ENCODE measurements at regions of chr12 and their contacts with region 1.

Region 1: DNA sequence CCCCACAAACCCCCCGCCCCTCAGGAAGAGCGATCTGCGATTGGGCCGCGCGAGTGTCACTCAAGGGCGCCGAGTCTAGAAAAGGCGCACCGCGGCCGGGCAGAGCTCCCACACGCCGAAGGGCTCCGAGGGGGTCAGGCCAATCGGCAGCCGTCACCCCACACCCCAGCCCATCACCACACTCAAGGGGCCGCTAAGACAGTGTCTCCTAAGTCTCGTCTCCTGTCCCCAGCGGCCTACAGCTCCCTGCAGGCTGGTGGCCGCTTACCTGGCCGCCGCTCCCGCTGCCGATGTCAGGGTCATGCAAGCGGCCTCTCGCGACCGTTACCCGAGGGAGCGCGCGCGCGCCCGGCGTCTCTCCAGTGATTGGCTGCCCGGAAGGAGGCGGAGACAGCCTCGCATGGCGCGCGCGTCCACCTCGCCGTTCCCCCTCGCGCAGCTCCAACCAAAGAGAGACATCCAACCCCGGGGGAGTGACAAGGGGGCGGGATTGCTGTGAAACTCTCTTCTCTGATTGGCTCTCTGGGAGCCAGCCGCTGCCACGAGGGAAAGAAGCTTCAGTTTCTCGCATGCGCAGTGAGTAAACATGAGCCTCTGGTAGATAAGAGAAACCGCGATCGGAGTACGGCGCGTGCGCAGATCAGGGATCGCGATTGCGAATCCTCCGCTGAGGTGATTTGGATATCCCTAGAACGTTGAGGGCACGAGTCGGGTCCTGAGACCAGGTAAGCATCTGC is at the starts of genes MPHOSPH9 and MTRFR:
- DNase-seq: peak; percentile 100
- ATAC-seq: peak; percentile 95
- H3K4me3 ChIP-seq: peak within 1 kb of the TSS; percentile 81 to 96 (median 95)
- H3K27ac ChIP-seq: peak within 1 kb of the TSS; percentile 89
- H3K4me1 ChIP-seq: peaks cover 55% of the 10 kb centered on the region
- H3K27me3 ChIP-seq: no peaks in the 10 kb centered on the region; a peak in 1 of 5 replicates
- CTCF ChIP-seq: no peak
- EP300 ChIP-seq: peak in 1 of 2 experiments; percentile 21; a peak in 2 of 4 replicates
- POLR2A ChIP-seq: peak; percentile 99
- RAD21 ChIP-seq: peak; percentile 72
- total RNA-seq, gene MPHOSPH9: 63.4 and 105 TPM in 2 replicates
- total RNA-seq, gene MTRFR: 9.9 and 10.0 TPM in 2 replicates

Region 2: GRCh38 chr12:122965851-122966722 is 266.9 kb before region 1 on chr12 and contains the start of gene ABCB9:
- CTCF ChIA-PET with region 1: no interaction called
- POLR2A ChIA-PET with region 1: interaction called, 7 read pairs
- in situ Hi-C with region 1: no loop called
- intact Hi-C with region 1: loop called (anchors 5 kb)
- DNase-seq: peak; percentile 85
- ATAC-seq: peak; percentile 88
- H3K4me3 ChIP-seq: peak within 1 kb of the TSS; percentile 74 to 82 (median 82)
- H3K27ac ChIP-seq: no peak within 1 kb of the TSS
- H3K4me1 ChIP-seq: peaks cover 53% of the 10 kb centered on the region
- H3K27me3 ChIP-seq: no peaks in the 10 kb centered on the region
- CTCF ChIP-seq: 0 out of 2 replicates have a peak, but pooled peaks have one; percentile 30
- EP300 ChIP-seq: peak in 1 of 2 experiments; percentile 20; a peak in 1 of 4 replicates
- POLR2A ChIP-seq: peak; percentile 40 to 80; a peak in 3 of 4 replicates
- RAD21 ChIP-seq: no peak
- total RNA-seq, gene ABCB9: 3.4 and 6.0 TPM in 2 replicates

Region 3: GRCh38 chr12:123043536-123044001 is 189.4 kb before region 1 on chr12:
- CTCF ChIA-PET with region 1: interaction called, 3 read pairs
- POLR2A ChIA-PET with region 1: interaction called, 17 read pairs
- in situ Hi-C with region 1: loop called (anchors 5 kb)
- intact Hi-C with region 1: loop called (anchors 1 kb)
- DNase-seq: peak; percentile 60
- ATAC-seq: peak; percentile 93
- H3K4me3 ChIP-seq: no peak overlapping the region
- H3K27ac ChIP-seq: no peak overlapping the region
- H3K4me1 ChIP-seq: 0 out of 2 replicates have a peak, but pooled peaks cover 5% of the 10 kb centered on the region
- H3K27me3 ChIP-seq: no peaks in the 10 kb centered on the region
- CTCF ChIP-seq: peak; percentile 93
- EP300 ChIP-seq: no peak
- POLR2A ChIP-seq: no peak
- RAD21 ChIP-seq: peak; percentile 90

Region 4: GRCh38 chr12:123150744-123151456 is 82.1 kb before region 1 on chr12 and contains the start of gene PITPNM2:
- CTCF ChIA-PET with region 1: no interaction called
- POLR2A ChIA-PET with region 1: interaction called, 20 read pairs
- in situ Hi-C with region 1: no loop called
- intact Hi-C with region 1: no loop called
- DNase-seq: no peak
- ATAC-seq: peak; percentile 70
- H3K4me3 ChIP-seq: peak within 1 kb of the TSS; percentile 90 to 98 (median 95)
- H3K27ac ChIP-seq: peak within 1 kb of the TSS; percentile 63
- H3K4me1 ChIP-seq: peaks cover 71% of the 10 kb centered on the region
- H3K27me3 ChIP-seq: no peaks in the 10 kb centered on the region
- CTCF ChIP-seq: no peak; the same call in 1 of the 2 replicates
- EP300 ChIP-seq: no peak
- POLR2A ChIP-seq: no peak
- RAD21 ChIP-seq: peak; percentile 57; the same call in 1 of the 2 replicates
- total RNA-seq, gene PITPNM2: 4.2 and 4.7 TPM in 2 replicates

Region 5: DNA sequence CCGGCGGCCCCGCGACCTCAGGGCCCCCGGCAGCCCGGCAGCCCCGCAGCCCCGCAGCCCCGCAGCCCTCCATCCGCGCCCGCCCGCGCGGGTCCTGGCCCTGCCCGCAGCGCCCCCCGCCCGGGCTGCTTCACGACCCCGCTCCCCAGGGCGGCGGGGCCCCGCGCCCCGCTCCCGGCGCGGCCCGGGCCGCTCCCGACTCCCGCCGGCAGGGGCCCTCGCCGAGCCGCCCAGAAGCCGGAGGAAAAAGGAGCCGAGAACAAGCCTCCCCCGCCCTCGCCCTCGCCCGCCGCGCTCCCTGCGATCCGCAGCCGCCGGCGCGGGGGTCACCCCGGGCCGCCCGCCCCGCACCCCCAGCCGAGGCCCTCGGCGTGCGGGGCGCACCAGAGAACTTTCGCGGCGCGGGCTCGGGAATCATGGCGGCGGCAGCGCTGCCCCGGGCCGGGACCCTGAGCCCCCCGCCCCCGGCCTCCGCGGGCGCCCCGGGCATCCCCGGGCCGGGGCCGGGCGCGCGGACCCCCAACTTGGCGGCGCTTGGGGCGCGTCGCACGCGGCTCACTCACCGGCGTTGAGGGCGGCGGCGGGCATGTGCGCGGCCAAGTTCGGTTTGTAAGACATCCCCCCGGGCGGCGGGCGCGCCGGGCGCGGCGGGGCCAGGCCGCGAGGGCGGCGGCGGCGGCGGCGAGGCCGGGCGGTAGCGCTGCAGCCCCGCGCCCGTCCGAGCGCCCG is 38.2 kb after region 1 on chr12:
- CTCF ChIA-PET with region 1: no interaction called
- POLR2A ChIA-PET with region 1: interaction called, 18 read pairs
- in situ Hi-C with region 1: no loop called
- intact Hi-C with region 1: no loop called
- DNase-seq: peak; percentile 31
- ATAC-seq: peak; percentile 35
- H3K4me3 ChIP-seq: peak overlapping the region; percentile 71 to 95 (median 81); a peak in 5 of 6 replicates
- H3K27ac ChIP-seq: peak overlapping the region; percentile 83
- H3K4me1 ChIP-seq: peaks cover 23% of the 10 kb centered on the region
- H3K27me3 ChIP-seq: no peaks in the 10 kb centered on the region; a peak in 1 of 5 replicates
- CTCF ChIP-seq: peak; percentile 60
- EP300 ChIP-seq: no peak
- POLR2A ChIP-seq: no peak
- RAD21 ChIP-seq: peak; percentile 86

Region 6: GRCh38 chr12:123388177-123388947 is 155.4 kb after region 1 on chr12:
- CTCF ChIA-PET with region 1: no interaction called
- POLR2A ChIA-PET with region 1: interaction called, 14 read pairs
- in situ Hi-C with region 1: no loop called
- intact Hi-C with region 1: no loop called
- DNase-seq: peak; percentile 58
- ATAC-seq: peak; percentile 34
- H3K4me3 ChIP-seq: peak overlapping the region; percentile 78 to 85 (median 81)
- H3K27ac ChIP-seq: peak overlapping the region; percentile 64
- H3K4me1 ChIP-seq: peaks cover 48% of the 10 kb centered on the region
- H3K27me3 ChIP-seq: no peaks in the 10 kb centered on the region
- CTCF ChIP-seq: peak; percentile 28; the same call in 1 of the 2 replicates
- EP300 ChIP-seq: no peak
- POLR2A ChIP-seq: no peak; a peak in 1 of 4 replicates
- RAD21 ChIP-seq: no peak